ENCODE measurements at regions of chr12 and their contacts with region 1.

Region 1: GRCh38 chr12:14741153-14741552 is 44.8 kb upstream of the GUCY2C start:
- DNase-seq: no peak
- ATAC-seq: no peak
- H3K4me3 Mint-ChIP-seq: no peak overlapping the region
- H3K27ac Mint-ChIP-seq: no peak overlapping the region
- H3K4me1 Mint-ChIP-seq: no peaks in the 10 kb centered on the region
- H3K27me3 Mint-ChIP-seq: no peaks in the 10 kb centered on the region

Region 2: DNA sequence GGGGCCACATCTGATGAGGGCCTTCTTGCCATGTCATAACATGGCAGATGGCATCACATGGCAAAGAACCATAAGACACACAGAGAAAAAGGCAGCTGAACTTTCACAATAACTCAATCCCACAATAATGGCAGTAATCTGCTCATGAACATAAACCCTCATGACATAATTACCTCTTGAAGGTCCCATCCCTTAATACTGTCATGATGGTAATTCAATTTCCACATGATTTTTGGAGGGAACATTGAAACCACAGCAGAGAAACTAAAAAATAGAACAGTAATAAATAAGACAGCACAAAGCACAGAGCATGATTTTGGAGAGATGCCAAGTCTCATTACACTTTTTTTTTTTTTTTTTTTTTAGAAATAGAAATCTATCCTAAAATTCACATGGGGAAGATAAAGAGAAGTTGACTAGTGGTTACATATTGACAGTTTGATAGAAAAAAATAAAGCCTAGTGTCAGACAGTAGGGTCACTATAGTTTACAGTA is 437.4 kb before region 1 on chr12:
- CTCF ChIA-PET with region 1: no interaction called
- DNase-seq: no peak
- ATAC-seq: no peak
- H3K4me3 Mint-ChIP-seq: no peak overlapping the region
- H3K27ac Mint-ChIP-seq: no peak overlapping the region
- H3K4me1 Mint-ChIP-seq: no peaks in the 10 kb centered on the region
- H3K27me3 Mint-ChIP-seq: no peaks in the 10 kb centered on the region

Region 3: GRCh38 chr12:14723763-14724162 is 17.4 kb before region 1 on chr12:
- CTCF ChIA-PET with region 1: interaction called, 11 read pairs
- DNase-seq: peak; percentile 65
- ATAC-seq: peak; percentile 64
- H3K4me3 Mint-ChIP-seq: no peak overlapping the region
- H3K27ac Mint-ChIP-seq: no peak overlapping the region
- H3K4me1 Mint-ChIP-seq: peaks cover 3% of the 10 kb centered on the region
- H3K27me3 Mint-ChIP-seq: peaks cover 16% of the 10 kb centered on the region

Region 4: GRCh38 chr12:14795028-14795448 is 53.9 kb after region 1 on chr12:
- CTCF ChIA-PET with region 1: no interaction called
- DNase-seq: no peak
- ATAC-seq: no peak
- H3K4me3 Mint-ChIP-seq: no peak overlapping the region
- H3K27ac Mint-ChIP-seq: no peak overlapping the region
- H3K4me1 Mint-ChIP-seq: peaks cover 3% of the 10 kb centered on the region
- H3K27me3 Mint-ChIP-seq: no peaks in the 10 kb centered on the region